OCI-LY7 (cell line): ENCODE measurements at regions of chr11 and their contacts with region 1.

Region 1: DNA sequence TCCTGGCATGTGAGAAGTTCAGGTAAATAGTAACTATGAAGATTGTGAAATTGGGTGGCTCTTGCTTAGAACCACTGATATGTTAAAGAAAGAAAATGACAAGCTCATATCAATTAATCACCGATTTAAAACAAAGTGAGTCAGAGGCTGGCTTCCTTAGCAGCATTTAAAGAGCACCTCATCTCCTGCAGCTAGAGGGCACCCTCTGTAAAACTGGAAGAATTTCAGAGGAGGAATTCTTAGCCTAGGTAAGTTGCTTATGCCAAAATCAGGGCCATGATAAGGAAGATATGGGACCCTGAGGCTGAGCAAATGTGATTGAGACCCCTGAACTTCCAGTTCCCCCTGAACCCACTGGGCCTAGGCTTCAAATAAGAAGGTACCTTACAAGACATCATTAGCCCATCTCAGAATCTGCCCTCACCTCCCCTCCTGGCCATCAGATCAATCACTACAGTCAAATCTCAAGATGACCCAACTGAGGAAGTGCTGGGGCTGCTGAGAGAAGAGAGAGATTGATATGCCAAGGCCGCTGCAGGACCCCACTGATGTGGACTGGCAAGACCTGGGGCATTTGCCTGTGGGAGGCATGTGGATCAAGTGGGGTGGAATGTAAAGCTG is 8.6 kb upstream of the CD3E start:
- DNase-seq: peak; percentile 67
- H3K4me3 ChIP-seq: no peak overlapping the region
- H3K27ac ChIP-seq: no peak overlapping the region
- H3K4me1 ChIP-seq: peaks cover 6% of the 10 kb centered on the region
- CTCF ChIP-seq: peak; percentile 91

Region 2: GRCh38 chr11:117759305-117759704 is 536.6 kb before region 1 on chr11:
- CTCF ChIA-PET with region 1: no interaction called
- POLR2A ChIA-PET with region 1: no interaction called
- intact Hi-C with region 1: no loop called
- DNase-seq: no peak
- H3K4me3 ChIP-seq: no peak overlapping the region
- H3K27ac ChIP-seq: no peak overlapping the region
- H3K4me1 ChIP-seq: no peaks in the 10 kb centered on the region
- CTCF ChIP-seq: no peak

Region 3: GRCh38 chr11:118010738-118011461 is 285.0 kb before region 1 on chr11:
- CTCF ChIA-PET with region 1: no interaction called
- POLR2A ChIA-PET with region 1: no interaction called
- intact Hi-C with region 1: no loop called
- DNase-seq: peak; percentile 93
- H3K4me3 ChIP-seq: peak overlapping the region; percentile 54
- H3K27ac ChIP-seq: peak overlapping the region; percentile 99
- H3K4me1 ChIP-seq: peaks cover 82% of the 10 kb centered on the region
- CTCF ChIP-seq: no peak

Region 4: DNA sequence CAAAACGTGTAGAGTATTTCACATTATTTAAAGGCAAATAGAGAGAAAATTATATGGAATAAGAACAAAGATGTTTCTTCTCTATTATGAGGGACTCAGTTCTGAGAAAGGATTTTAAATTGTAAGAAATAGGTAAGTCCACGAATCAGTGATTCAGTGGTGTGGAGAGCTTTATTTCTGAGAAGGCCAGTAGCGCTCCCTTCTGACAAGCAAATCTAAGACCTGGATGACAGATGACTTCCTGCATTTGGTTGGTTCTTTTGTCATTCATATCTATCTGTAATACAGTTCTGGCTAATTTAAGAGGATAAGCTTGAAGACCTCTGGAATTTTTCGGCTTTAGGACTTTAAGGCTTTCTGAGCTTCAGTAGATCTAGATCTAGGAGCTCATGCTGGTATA is 15.6 kb after region 1 on chr11:
- CTCF ChIA-PET with region 1: interaction called, 5 read pairs
- POLR2A ChIA-PET with region 1: interaction called, 10 read pairs
- intact Hi-C with region 1: no loop called
- DNase-seq: peak; percentile 50
- H3K4me3 ChIP-seq: peak overlapping the region; percentile 43
- H3K27ac ChIP-seq: peak overlapping the region; percentile 99
- H3K4me1 ChIP-seq: peaks cover 60% of the 10 kb centered on the region
- CTCF ChIP-seq: peak; percentile 66

Region 5: GRCh38 chr11:118353084-118353710 is 57.3 kb after region 1 on chr11:
- CTCF ChIA-PET with region 1: interaction called, 6 read pairs
- POLR2A ChIA-PET with region 1: interaction called, 4 read pairs
- intact Hi-C with region 1: loop called (anchors 1 kb)
- DNase-seq: peak; percentile 60
- H3K4me3 ChIP-seq: no peak overlapping the region
- H3K27ac ChIP-seq: no peak overlapping the region
- H3K4me1 ChIP-seq: peaks cover 5% of the 10 kb centered on the region
- CTCF ChIP-seq: peak; percentile 92

Region 6: GRCh38 chr11:118488480-118489109 is 192.7 kb after region 1 on chr11:
- CTCF ChIA-PET with region 1: no interaction called
- POLR2A ChIA-PET with region 1: no interaction called
- intact Hi-C with region 1: loop called (anchors 5 kb)
- DNase-seq: peak; percentile 79
- H3K4me3 ChIP-seq: no peak overlapping the region
- H3K27ac ChIP-seq: no peak overlapping the region
- H3K4me1 ChIP-seq: no peaks in the 10 kb centered on the region
- CTCF ChIP-seq: peak; percentile 99